Activated CD4-positive, alpha-beta T cell treated with anti-CD3 and anti-CD28 coated beads, Interleukin-2, amount 10 ng/mL, durations not matched to agents 7 days and 5 days (primary cell): ENCODE measurements at regions of chr15 and their contacts with region 1.

Region 1: DNA sequence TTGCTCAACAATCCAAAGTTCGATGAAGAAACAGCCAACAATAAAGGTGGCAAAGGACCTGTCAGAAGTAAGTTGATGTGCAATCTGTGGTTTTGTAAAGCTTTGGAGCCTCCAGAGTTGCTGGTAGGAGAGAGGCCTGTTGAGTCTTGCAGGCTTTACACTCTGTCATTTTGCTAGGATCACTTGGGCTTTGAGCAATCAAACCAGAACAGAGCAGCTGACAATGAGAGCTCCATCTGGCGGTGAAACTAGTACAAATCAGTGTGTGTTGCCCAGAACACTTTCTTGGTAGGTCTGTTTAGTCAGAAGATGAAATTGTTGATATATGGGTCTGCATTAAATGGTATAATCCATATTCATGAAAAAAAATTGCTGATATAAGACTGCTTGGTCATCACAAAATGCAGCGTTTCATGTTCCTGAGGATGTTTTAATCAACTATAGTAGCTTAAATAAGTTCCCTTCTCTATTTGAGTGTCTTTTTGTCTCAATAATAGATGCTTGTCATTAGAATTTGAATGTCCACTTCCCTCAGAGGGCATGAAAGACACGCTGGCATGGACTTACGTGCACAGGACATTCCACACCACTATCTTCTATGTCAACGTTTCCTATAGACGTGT is 25.7 kb downstream of the TMOD2 start:
- DNase-seq: peak; percentile 82
- H3K4me3 Mint-ChIP-seq: no peak overlapping the region
- H3K27ac Mint-ChIP-seq: no peak overlapping the region
- H3K4me1 Mint-ChIP-seq: peaks cover 9% of the 10 kb centered on the region
- H3K27me3 Mint-ChIP-seq: no peaks in the 10 kb centered on the region

Region 2: DNA sequence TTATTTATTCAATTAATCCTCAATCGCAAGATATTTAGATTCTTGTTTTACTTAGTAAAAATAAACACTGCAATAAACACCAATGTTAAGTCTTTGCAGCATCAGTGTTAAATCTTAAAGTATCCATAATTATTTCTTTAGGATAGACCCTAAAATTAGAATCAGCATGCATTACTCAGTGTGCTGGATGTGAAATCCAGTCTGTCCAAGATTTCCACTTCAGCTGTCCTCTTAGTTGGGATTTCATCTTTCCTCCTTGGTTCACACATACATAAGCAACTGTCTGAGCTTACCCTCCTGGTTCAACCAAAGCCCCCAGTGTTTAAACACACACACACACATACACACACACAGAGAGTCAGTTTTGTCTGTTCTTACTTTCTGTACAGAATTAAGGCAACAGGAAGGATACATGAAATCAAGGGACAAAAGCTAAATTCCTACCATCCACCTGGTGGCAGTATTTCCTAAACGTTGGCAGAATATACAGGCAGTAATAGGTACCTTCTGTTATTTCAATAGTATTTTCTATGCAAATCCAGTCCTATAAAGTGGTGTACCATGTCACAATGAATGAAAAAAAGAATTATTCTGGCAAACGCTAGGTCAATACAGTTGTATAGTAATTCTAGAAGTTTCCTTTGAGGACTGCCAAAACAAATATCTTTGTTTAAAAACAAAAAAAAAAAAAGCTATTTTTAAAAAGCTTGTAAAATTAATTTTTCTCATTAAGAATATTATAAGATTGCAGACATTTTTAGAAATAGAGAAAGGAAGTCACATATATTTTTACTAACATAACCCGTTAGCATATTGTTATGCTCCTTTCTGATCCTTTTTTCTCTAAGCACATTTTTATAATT is 127.2 kb before region 1 on chr15:
- CTCF ChIA-PET with region 1: interaction called, 31 read pairs
- POLR2A ChIA-PET with region 1: interaction called, 3 read pairs
- DNase-seq: peak; percentile 73
- H3K4me3 Mint-ChIP-seq: no peak overlapping the region
- H3K27ac Mint-ChIP-seq: no peak overlapping the region
- H3K4me1 Mint-ChIP-seq: peaks cover 4% of the 10 kb centered on the region
- H3K27me3 Mint-ChIP-seq: peaks cover 12% of the 10 kb centered on the region

Region 3: GRCh38 chr15:51917493-51917892 is 140.4 kb after region 1 on chr15:
- CTCF ChIA-PET with region 1: no interaction called
- POLR2A ChIA-PET with region 1: no interaction called
- DNase-seq: no peak
- H3K4me3 Mint-ChIP-seq: no peak overlapping the region
- H3K27ac Mint-ChIP-seq: no peak overlapping the region
- H3K4me1 Mint-ChIP-seq: no peaks in the 10 kb centered on the region
- H3K27me3 Mint-ChIP-seq: no peaks in the 10 kb centered on the region